ENCODE measurements at regions of chr12 and their contacts with region 1.

Region 1: GRCh38 chr12:103548622-103549601 is 38.2 kb upstream of the STAB2 start:
- DNase-seq: peak; percentile 92
- H3K4me3 ChIP-seq: no peak overlapping the region
- H3K27ac ChIP-seq: no peak overlapping the region
- H3K4me1 ChIP-seq: no peaks in the 10 kb centered on the region
- H3K27me3 ChIP-seq: peaks cover 0 to 7% (median 0%) of the 10 kb centered on the region in 4 donors
- CTCF ChIP-seq: peak; percentile 79 to 82 (median 80)
- EP300 ChIP-seq: no peak
- POLR2A ChIP-seq: no peak

Region 2: GRCh38 chr12:102883204-102883799 is 665.6 kb before region 1 on chr12:
- intact Hi-C with region 1: loop called (anchors 5 kb)
- DNase-seq: no peak
- H3K4me3 ChIP-seq: no peak overlapping the region
- H3K27ac ChIP-seq: no peak overlapping the region
- H3K4me1 ChIP-seq: peaks cover 0 to 6% (median 2%) of the 10 kb centered on the region in 4 donors
- H3K27me3 ChIP-seq: peaks cover 0 to 62% (median 0%) of the 10 kb centered on the region in 4 donors
- CTCF ChIP-seq: peak; percentile 55 to 79 (median 56)
- EP300 ChIP-seq: no peak
- POLR2A ChIP-seq: no peak

Region 3: GRCh38 chr12:102948941-102949352 is 600.0 kb before region 1 on chr12:
- intact Hi-C with region 1: loop called (anchors 2 kb)
- DNase-seq: peak; percentile 92
- H3K4me3 ChIP-seq: no peak overlapping the region
- H3K27ac ChIP-seq: no peak overlapping the region
- H3K4me1 ChIP-seq: peaks cover 0 to 13% (median 0%) of the 10 kb centered on the region in 4 donors
- H3K27me3 ChIP-seq: peaks cover 3 to 83% (median 13%) of the 10 kb centered on the region in 4 donors
- CTCF ChIP-seq: peak; percentile 69 to 83 (median 79)
- EP300 ChIP-seq: no peak
- POLR2A ChIP-seq: no peak

Region 4: GRCh38 chr12:103596981-103597380 is 48.1 kb after region 1 on chr12:
- intact Hi-C with region 1: no loop called
- DNase-seq: peak; percentile 34
- H3K4me3 ChIP-seq: no peak overlapping the region
- H3K27ac ChIP-seq: no peak overlapping the region
- H3K4me1 ChIP-seq: no peaks in the 10 kb centered on the region
- H3K27me3 ChIP-seq: peaks cover 0 to 3% (median 0%) of the 10 kb centered on the region in 4 donors
- CTCF ChIP-seq: no peak
- EP300 ChIP-seq: no peak
- POLR2A ChIP-seq: no peak